ENCODE measurements at regions of chr1 and their contacts with region 1.

Region 1: DNA sequence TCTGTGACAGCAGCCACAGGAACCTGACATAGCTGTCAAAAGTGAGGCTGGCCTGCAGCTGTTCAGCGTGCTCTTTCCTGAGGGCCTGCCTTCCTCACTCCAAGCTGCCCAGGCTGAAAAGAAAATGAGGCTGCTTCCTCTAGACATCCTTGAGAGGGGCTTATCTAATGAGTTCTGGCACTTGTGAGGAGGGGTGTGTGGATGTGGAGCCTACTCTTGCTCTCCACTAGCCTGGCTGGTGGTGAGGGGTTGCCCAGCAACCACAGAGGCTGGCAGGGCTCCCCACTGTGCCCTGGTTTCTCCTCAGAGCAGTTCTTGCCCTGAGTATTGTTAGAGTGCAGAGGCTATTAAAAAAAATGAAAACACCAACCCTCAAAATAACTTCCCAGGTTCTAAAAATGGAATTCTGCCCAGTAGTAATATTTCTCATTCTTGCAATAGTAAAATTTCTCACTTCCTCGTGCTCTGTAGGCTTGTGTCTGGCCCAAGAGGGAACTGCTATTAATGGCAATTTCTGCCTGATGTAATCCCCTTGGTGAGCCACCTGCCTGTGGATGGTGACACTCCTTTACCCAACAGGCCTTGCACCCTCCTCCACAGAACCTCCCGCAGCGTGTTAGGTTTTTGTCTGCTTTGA is 52.6 kb upstream of the EPS8L3 start:
- DNase-seq: no peak
- ATAC-seq: peak; percentile 98
- H3K4me3 Mint-ChIP-seq: peak overlapping the region; percentile 52
- H3K27ac Mint-ChIP-seq: peak overlapping the region; percentile 73
- H3K4me1 Mint-ChIP-seq: peaks cover 44% of the 10 kb centered on the region
- H3K27me3 Mint-ChIP-seq: no peaks in the 10 kb centered on the region
- CTCF ChIP-seq: no peak

Region 2: GRCh38 chr1:109886827-109887226 is 70.5 kb after region 1 on chr1:
- CTCF ChIA-PET with region 1: no interaction called
- POLR2A ChIA-PET with region 1: no interaction called
- intact Hi-C with region 1: loop called (anchors 2 kb)
- DNase-seq: no peak
- ATAC-seq: peak; percentile 92
- H3K4me3 Mint-ChIP-seq: peak overlapping the region; percentile 39
- H3K27ac Mint-ChIP-seq: peak overlapping the region; percentile 77
- H3K4me1 Mint-ChIP-seq: peaks cover 60% of the 10 kb centered on the region
- H3K27me3 Mint-ChIP-seq: peaks cover 15% of the 10 kb centered on the region
- CTCF ChIP-seq: no peak

Measured in activated B cell treated with CpG ODN at 0.5 μM for 24 hours (primary cell).